ENCODE measurements at regions of chr22 and their contacts with region 1.

Region 1: DNA sequence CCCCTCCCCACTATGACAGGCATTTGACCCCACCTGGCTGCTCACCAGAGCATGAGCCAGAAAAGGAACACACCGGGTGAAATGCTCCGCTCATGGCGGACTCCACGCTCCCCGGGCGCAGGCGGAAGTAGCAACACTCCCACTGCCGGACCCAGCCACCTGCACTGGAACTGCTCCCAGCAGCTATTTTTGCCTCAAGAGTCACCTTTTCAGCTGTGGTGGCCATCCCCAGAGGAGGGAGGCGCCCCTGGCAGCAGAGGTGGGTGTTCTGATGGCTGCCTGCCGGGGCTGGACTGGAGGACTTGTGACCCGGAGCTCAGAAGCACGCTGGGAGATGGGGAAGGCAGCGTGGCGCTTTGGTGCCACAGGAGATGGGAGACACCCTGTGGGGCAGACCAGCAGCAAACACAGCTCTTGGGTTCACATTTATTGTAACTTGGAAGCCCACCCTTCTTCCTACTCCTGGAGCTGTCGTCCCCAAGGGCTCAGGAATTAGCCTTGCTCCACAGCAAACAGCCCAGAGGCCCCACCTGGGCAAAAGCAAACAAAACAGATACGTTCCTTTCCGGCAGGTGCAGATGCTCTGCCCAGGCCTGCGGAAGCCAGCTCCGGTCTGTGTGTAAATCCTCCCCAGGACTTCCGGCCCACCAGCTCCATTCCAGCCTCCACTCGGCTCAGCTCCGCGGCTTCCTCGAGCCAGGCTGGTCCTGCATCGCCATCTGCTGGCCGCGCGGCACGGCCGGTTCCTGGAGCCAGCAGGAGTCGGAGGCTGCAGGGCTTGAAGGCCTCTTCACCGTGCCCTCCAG is 3.7 kb downstream of the RPS19BP1 start:
- DNase-seq: peak; percentile 92
- H3K4me3 Mint-ChIP-seq: peak overlapping the region; percentile 98
- H3K27ac Mint-ChIP-seq: peak overlapping the region; percentile 4
- H3K4me1 Mint-ChIP-seq: peaks cover 65% of the 10 kb centered on the region
- H3K27me3 Mint-ChIP-seq: no peaks in the 10 kb centered on the region
- CTCF ChIP-seq: peak; percentile 97

Region 2: DNA sequence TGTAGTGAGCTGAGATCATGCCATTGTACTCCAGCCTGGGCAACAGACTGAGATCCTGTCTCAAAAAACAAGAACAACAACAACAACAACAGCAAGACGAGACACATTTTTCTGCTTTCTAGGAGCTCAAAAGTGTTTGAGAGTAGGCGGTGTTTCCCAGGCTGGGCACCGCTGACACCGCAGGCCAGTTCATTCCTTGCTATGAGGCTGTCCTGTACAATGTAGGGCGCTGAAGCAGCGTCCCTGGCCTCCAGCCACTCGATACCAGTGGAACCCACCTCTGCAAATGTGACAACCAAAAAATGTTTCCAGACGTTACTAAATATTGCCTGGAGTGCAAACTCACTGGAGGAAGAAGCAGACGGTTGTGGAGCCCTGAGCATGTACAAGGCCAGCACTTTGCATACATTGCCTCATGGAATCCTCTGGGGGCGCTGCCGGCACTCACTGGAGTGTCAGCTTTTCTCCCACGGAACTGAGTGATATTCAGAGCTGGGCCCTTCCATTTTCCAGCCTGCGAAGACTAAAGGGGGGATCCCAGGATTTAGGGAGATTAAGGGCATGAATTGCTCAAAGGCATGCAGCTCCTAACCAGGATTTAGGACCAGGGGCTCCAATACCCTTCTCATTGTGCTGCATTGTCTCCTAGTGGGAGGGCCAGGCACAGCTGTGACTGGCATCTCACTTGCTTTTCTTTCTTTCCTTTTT is 32.6 kb before region 1 on chr22:
- CTCF ChIA-PET with region 1: interaction called, 16 read pairs
- intact Hi-C with region 1: no loop called
- DNase-seq: peak; percentile 64
- H3K4me3 Mint-ChIP-seq: no peak overlapping the region
- H3K27ac Mint-ChIP-seq: no peak overlapping the region
- H3K4me1 Mint-ChIP-seq: peaks cover 39% of the 10 kb centered on the region
- H3K27me3 Mint-ChIP-seq: no peaks in the 10 kb centered on the region
- CTCF ChIP-seq: peak; percentile 58

Region 3: GRCh38 chr22:39546889-39547586 is 18.2 kb after region 1 on chr22:
- CTCF ChIA-PET with region 1: no interaction called
- intact Hi-C with region 1: no loop called
- DNase-seq: no peak
- H3K4me3 Mint-ChIP-seq: no peak overlapping the region
- H3K27ac Mint-ChIP-seq: no peak overlapping the region
- H3K4me1 Mint-ChIP-seq: peaks cover 9% of the 10 kb centered on the region
- H3K27me3 Mint-ChIP-seq: peaks cover 84% of the 10 kb centered on the region
- CTCF ChIP-seq: no peak

Region 4: DNA sequence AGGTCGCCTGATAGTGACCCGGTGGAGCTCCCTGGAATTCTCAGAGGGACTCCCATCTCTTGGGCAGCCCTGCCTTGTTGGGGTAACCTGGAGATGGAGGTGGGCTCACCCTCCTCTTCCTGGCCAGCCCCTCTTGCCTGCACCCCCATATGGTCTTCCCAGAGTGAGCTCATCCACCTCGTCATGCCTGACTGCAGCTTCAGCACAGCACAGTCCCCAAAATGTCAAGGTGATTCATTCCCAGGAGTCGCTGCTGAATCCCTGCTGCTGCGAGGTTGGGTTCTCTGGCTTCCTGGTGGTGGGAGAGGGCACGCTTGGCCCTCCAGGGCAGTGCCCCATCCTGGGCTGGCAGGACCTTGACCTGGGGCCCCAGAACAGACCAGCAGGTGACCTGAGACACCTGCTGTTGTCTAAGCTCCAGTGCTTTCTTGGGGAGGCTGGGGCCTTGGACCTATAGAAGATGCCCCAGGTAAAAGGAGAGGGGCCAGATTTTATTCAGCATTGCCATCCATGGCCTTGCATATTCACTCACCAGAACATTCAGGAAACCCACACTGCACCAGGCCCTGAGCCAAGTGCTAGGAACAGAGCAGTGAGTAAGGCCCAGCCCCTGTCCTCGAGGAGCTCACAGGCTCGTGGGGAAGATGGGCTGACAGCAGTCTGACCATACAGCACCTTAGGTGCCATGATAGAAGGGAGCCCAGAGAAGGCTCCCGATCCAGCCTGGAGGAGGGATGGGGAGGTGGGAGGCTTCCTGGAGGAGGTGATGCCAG is 114.6 kb after region 1 on chr22:
- CTCF ChIA-PET with region 1: no interaction called
- intact Hi-C with region 1: no loop called
- DNase-seq: no peak
- H3K4me3 Mint-ChIP-seq: no peak overlapping the region
- H3K27ac Mint-ChIP-seq: no peak overlapping the region
- H3K4me1 Mint-ChIP-seq: no peaks in the 10 kb centered on the region
- H3K27me3 Mint-ChIP-seq: peaks cover 60% of the 10 kb centered on the region
- CTCF ChIP-seq: no peak

Measured in Calu3 (cell line).